Mammary epithelial cell (primary cell): ENCODE measurements at regions of chr6 and their contacts with region 1.

Region 1: DNA sequence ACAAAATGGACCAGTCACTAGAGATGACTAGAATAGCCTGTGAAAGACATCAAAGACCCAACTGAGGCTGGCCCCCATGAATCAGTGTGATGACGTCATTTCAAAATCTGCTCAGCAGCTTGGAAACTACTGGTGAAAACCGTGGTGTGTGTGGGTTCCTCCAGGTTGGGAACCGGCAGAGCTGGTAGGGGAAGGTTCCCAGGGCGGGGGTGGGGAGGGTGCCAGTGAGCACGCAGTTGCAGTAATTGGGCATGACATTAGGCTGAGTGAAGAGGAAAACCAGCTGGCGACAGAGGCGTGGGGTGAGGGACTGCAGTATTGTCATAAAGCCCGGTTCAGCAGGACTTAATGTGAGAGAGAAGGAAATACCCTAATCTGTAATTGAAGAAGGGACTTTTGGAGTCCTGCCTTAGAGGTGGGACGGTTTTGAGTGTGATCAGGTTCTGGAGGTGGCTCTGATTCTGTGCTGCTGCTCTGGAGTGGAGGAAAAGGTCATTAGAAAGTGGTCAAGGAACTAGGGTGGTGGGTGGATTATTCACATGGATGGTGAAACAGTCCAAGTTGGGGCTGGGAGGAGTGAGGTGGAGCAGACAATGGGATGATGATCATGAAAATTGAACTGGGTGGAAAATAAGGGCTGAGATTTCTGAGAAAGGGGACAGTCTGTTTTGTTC is 52.0 kb upstream of the MTHFD1L start:
- DNase-seq: peak; percentile 92
- H3K4me3 ChIP-seq: no peak overlapping the region
- H3K27ac ChIP-seq: peak overlapping the region; percentile 54
- H3K4me1 ChIP-seq: peaks cover 12% of the 10 kb centered on the region
- H3K27me3 ChIP-seq: no peaks in the 10 kb centered on the region
- CTCF ChIP-seq: no peak

Region 2: DNA sequence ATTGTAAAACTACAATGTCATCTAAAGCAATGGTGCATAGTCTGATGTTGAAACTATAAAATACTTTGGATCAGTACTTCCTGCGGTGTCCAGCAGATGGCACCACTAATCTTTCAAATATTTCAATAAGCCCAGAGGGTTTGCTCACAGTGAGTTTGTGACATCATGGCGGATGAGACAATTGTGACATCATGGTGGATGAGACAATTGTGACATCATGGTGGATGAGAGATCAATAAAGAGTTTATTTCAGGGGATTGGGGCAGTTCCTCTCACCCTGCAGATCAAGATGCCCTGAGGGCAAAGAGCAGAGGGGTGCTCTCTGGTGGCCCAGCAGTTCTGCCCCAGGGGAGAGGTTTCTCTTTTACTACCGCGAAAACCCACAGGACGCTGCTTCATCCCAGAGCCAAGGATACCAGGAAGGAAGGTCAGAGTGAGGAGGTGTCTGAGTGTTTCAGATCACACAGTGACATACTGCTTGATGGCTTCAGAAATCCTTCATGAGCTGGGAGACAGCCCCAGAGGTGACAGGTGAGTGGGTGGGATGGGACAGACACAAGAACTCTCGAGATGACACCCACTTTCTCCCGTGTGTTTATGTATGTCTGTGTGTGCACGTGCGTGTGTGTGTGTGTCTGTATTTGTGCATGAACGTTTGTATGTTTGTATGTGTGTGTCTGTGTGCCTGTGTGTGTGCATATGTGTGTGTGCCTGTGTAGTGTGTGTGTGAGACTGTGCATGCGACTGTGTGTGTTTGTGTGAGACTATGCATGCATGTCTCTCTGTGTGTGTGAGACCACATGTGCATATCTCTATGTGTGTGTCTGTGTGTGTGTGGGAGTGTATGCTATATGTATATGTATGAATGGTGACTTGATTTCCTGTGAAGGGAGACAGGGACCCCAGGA is 879.0 kb before region 1 on chr6:
- CTCF ChIA-PET with region 1: no interaction called
- dilution Hi-C with region 1: no loop called
- in situ Hi-C with region 1: no loop called
- intact Hi-C with region 1: loop called (anchors 10 kb)
- DNase-seq: peak; percentile 56
- H3K4me3 ChIP-seq: no peak overlapping the region
- H3K27ac ChIP-seq: no peak overlapping the region
- H3K4me1 ChIP-seq: peaks cover 11% of the 10 kb centered on the region
- H3K27me3 ChIP-seq: no peaks in the 10 kb centered on the region
- CTCF ChIP-seq: peak; percentile 67 to 70

Region 3: DNA sequence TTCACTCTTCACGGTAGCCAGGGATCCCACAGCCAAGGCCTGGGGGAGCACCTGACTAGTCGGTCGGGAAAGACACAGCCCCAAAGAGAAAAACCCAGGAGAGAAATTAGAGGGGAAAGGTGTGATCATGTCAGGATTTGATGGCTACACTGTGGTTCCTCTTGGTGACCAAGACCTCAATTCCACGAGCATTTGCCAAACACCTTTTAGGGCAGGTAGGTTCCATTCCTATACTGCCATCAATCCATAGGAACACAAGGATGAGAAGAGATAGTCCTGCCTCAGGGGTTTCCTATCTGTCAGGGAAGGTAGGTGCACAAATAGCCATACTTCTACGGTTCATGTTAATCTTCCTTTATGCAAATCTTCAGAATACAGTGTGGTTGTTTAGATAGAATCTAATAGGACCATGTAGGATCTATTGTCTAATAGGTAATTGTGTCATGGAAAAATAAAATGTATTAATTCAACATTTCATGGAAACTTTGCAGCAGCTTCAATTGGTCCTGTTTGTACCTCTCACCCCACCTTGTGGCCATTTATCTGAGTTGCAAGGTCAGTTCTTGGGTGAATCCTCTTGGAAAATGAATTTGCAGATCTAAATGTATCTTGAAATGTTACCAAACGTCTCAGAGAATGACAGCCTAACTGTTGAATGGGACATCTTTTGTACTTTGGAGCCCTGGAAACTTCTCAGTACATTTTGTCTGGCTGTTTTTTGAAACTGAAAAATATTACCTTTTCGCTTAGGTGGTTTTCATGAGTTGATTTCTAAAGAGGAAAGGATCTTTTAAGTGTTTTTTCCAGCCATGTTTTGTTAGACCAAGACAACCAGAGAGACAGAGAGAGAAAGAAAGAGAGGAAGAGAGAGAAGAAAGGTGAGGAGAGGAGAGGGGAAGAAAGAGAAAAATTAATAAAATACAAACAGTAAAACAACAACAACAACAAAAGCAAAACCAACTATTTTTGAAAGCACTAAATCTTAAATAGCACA is 478.4 kb before region 1 on chr6:
- CTCF ChIA-PET with region 1: no interaction called
- dilution Hi-C with region 1: no loop called
- in situ Hi-C with region 1: no loop called
- intact Hi-C with region 1: loop called (anchors 2 kb)
- DNase-seq: peak; percentile 67
- H3K4me3 ChIP-seq: no peak overlapping the region
- H3K27ac ChIP-seq: peak overlapping the region; percentile 59
- H3K4me1 ChIP-seq: peaks cover 26% of the 10 kb centered on the region
- H3K27me3 ChIP-seq: no peaks in the 10 kb centered on the region
- CTCF ChIP-seq: peak; percentile 82 to 88

Region 4: DNA sequence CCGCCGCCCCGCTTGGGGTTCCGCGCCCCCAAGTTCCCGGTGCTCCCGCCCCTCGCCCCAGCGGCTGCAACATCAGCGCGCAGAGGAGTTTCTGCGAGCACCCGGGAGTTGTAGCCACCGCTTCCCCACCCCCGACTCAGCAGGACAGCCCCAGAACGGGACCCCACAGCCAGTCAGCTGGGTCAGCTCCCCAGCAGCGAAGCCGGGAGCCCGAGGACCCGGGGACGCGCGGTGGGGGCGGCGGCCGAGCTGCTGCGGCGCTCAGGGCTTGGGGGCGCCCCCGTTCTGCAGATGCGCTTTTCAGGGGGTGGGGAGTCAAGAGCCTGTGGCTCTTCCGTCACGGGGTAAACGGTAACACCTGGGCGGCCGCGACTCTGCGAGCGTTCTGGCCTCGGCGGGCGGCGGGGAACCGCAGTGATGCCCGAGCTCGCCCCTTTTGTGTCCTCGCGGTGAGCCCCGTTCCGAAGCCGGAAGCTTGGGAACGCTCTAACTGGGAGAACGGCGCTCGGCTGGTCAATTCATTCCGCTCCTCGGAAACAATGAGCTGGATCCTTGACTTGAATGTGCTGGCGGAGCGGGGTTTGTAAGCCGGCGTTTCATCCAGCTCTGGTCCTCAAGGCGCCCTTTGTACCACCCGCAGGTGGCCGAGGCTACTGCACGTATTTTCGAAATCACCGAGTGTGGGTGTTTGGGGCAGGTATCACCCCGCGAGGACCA is 213.0 kb before region 1 on chr6:
- CTCF ChIA-PET with region 1: interaction called, 4 read pairs
- dilution Hi-C with region 1: no loop called
- in situ Hi-C with region 1: no loop called
- intact Hi-C with region 1: loop called (anchors 1 kb)
- DNase-seq: peak; percentile 90
- H3K4me3 ChIP-seq: peak overlapping the region; percentile 69 to 81 (median 80)
- H3K27ac ChIP-seq: peak overlapping the region; percentile 47
- H3K4me1 ChIP-seq: peaks cover 15% of the 10 kb centered on the region
- H3K27me3 ChIP-seq: no peaks in the 10 kb centered on the region
- CTCF ChIP-seq: peak; percentile 53 to 79

Region 5: GRCh38 chr6:150685860-150686259 is 127.6 kb before region 1 on chr6:
- CTCF ChIA-PET with region 1: interaction called, 26 read pairs
- dilution Hi-C with region 1: no loop called
- in situ Hi-C with region 1: no loop called
- intact Hi-C with region 1: loop called (anchors 1 kb)
- DNase-seq: peak; percentile 72
- H3K4me3 ChIP-seq: no peak overlapping the region
- H3K27ac ChIP-seq: no peak overlapping the region
- H3K4me1 ChIP-seq: peaks cover 24% of the 10 kb centered on the region
- H3K27me3 ChIP-seq: no peaks in the 10 kb centered on the region
- CTCF ChIP-seq: peak; percentile 89 to 96

Region 6: DNA sequence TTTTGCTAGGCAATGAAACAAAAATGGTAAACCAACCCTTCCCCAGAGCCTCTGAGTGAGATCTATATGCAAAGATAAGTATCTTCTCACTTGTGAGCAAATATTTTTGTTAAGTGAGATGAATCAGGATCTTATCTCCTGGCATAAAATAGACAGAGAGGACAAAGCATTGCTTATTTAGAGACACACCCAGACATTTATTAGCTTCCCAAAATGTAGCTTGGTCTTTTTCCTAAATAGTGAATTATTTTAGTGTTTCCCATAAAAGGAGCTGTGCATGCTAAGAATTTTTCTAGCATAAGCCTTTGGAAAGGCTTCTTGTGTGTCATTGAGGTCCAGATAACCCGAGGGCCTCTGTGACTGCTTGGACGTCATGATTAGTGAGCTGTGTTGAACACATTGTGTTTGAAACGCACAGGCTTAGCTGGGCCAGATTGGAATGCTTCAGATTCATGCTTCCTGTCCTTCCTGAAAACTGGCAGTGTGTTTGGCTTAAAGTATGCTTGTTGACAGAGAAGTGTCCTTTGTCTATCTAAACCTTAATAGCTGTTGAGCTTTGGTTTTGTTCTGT is 68.5 kb after region 1 on chr6:
- CTCF ChIA-PET with region 1: interaction called, 3 read pairs
- dilution Hi-C with region 1: no loop called
- in situ Hi-C with region 1: no loop called
- intact Hi-C with region 1: loop called (anchors 5 kb)
- DNase-seq: peak; percentile 84
- H3K4me3 ChIP-seq: no peak overlapping the region
- H3K27ac ChIP-seq: peak overlapping the region; percentile 64
- H3K4me1 ChIP-seq: peaks cover 18% of the 10 kb centered on the region
- H3K27me3 ChIP-seq: no peaks in the 10 kb centered on the region
- CTCF ChIP-seq: no peak